ENCODE measurements at regions of chr1 and their contacts with region 1.

Region 1: GRCh38 chr1:213179784-213180183 is 128.7 kb downstream of the RPS6KC1 start:
- DNase-seq: no peak
- H3K4me3 ChIP-seq: no peak overlapping the region
- H3K27ac ChIP-seq: no peak overlapping the region
- H3K4me1 ChIP-seq: no peaks in the 10 kb centered on the region
- H3K27me3 ChIP-seq: no peaks in the 10 kb centered on the region
- CTCF ChIP-seq: no peak

Region 2: GRCh38 chr1:213154056-213154685 is 25.6 kb before region 1 on chr1:
- CTCF ChIA-PET with region 1: no interaction called
- POLR2A ChIA-PET with region 1: no interaction called
- intact Hi-C with region 1: no loop called
- DNase-seq: no peak
- H3K4me3 ChIP-seq: no peak overlapping the region
- H3K27ac ChIP-seq: no peak overlapping the region
- H3K4me1 ChIP-seq: no peaks in the 10 kb centered on the region
- H3K27me3 ChIP-seq: no peaks in the 10 kb centered on the region
- CTCF ChIP-seq: no peak

Region 3: DNA sequence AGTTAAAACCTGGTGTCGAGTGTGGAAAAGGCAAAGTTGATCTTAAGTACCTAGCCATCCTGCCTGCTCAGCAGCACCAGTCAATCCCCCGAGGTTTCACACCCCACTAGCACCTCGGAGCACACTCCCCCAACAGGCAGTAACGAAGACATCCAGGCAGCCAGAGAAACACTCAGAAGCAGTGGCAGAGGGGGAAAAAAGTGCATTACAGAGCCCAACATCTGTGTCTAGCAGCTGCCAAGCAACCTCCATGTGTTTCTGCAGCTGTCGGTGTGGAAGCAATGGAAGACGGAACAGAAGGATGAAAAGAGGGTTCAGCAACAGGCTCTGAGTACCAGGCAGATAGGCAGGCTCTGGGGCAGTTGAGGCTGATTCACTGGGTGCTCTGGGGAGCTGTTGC is 734.6 kb after region 1 on chr1:
- CTCF ChIA-PET with region 1: no interaction called
- POLR2A ChIA-PET with region 1: interaction called, 20 read pairs
- intact Hi-C with region 1: no loop called
- DNase-seq: no peak
- H3K4me3 ChIP-seq: no peak overlapping the region
- H3K27ac ChIP-seq: no peak overlapping the region
- H3K4me1 ChIP-seq: no peaks in the 10 kb centered on the region
- H3K27me3 ChIP-seq: peaks cover 84% of the 10 kb centered on the region
- CTCF ChIP-seq: no peak

Measured in A673 (cell line).